Heart right ventricle (tissue), 16 donors: ENCODE measurements at regions of chr20 and their contacts with region 1.

Region 1: GRCh38 chr20:49427751-49428518 is 54.5 kb downstream of the KCNB1 start:
- DNase-seq: peak; percentile 37 to 59
- ATAC-seq: peak; percentile 14 to 89 (median 77)
- H3K4me3 ChIP-seq: peak overlapping the region in 4 of 10 donors; percentile 13 to 25 (median 20)
- H3K27ac ChIP-seq: peak overlapping the region; percentile 45 to 88 (median 78)
- H3K4me1 ChIP-seq: peaks cover 0 to 54% (median 28%) of the 10 kb centered on the region in 9 donors
- H3K27me3 ChIP-seq: no peaks in the 10 kb centered on the region
- CTCF ChIP-seq: no peak

Region 2: GRCh38 chr20:49391404-49392245 is 36.3 kb before region 1 on chr20:
- intact Hi-C with region 1: loop called in 2 of 10 experiments (anchors 1 to 5 kb)
- DNase-seq: peak in 1 of 2 donors; percentile 36
- ATAC-seq: peak; percentile 40 to 83 (median 74)
- H3K4me3 ChIP-seq: no peak overlapping the region
- H3K27ac ChIP-seq: peak overlapping the region; percentile 31 to 74 (median 63)
- H3K4me1 ChIP-seq: peaks cover 0 to 44% (median 12%) of the 10 kb centered on the region in 9 donors
- H3K27me3 ChIP-seq: peaks cover 0 to 8% (median 0%) of the 10 kb centered on the region in 7 donors
- CTCF ChIP-seq: no peak

Region 3: DNA sequence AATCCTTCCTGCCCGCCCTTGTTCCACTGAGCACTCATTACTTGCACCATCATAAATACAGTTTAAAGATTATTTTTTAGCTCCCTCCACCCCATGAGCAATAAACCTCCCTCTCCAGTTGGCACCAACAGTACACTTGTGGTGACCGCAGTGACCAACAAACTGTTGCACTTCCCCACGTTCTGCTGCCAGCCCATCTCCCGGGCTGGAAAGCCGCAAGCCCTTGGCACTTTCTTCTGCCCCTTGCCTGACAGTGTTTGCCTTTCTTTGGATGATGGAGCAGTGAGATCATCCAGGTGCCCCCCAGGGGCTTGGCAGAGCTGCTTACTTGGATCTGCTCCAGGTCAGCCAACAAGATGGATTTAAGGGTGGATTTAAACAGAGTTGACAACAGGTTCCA is 33.0 kb after region 1 on chr20:
- intact Hi-C with region 1: no loop called
- DNase-seq: no peak
- ATAC-seq: no peak
- H3K4me3 ChIP-seq: no peak overlapping the region
- H3K27ac ChIP-seq: no peak overlapping the region
- H3K4me1 ChIP-seq: peaks cover 0 to 6% (median 0%) of the 10 kb centered on the region in 9 donors
- H3K27me3 ChIP-seq: peaks cover 0 to 4% (median 0%) of the 10 kb centered on the region in 7 donors
- CTCF ChIP-seq: no peak